ENCODE measurements at regions of chr6 and their contacts with region 1.

Region 1: DNA sequence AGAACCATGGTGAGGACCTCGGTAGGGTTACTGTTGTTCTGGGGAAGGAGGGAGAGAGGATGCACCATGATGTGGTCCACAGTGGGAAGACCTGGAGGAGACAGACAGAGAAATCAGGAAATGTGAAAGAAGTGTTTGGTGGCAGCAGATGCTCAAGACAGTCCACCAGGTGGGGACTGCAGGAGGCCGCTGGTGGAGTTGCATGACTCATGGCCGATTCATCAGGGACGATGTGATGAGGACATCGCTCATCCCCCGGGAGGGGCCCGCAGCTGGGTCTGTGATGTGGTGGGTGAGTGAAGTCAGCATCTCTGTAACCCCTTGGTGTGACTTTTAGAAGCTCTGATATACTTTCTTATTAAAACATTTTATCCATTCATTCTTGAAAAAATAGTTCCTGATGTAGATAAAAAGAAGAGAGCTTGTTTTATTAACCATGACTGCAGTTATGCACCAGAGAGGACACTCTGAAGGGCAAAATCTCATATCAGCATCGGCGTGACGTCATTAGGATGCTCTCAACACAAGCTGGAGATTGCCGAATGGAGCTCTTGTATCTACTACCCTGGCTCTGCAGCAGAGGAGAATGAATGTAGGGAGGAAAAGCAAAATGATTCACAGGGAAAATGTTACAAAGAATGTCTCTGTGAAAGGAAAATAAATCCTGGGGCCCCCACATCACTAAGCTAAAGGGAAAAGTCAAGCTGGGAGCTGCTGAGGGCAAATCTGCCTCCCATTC is 71.2 kb downstream of the RAMACL start:
- DNase-seq: peak; percentile 83
- H3K4me3 Mint-ChIP-seq: no peak overlapping the region
- H3K27ac Mint-ChIP-seq: no peak overlapping the region
- H3K4me1 Mint-ChIP-seq: peaks cover 20% of the 10 kb centered on the region
- H3K27me3 Mint-ChIP-seq: no peaks in the 10 kb centered on the region
- CTCF ChIP-seq: peak; percentile 54

Region 2: GRCh38 chr6:166556871-166557322 is 41.7 kb after region 1 on chr6:
- CTCF ChIA-PET with region 1: interaction called, 3 read pairs
- POLR2A ChIA-PET with region 1: no interaction called
- intact Hi-C with region 1: loop called (anchors 2 kb)
- DNase-seq: peak; percentile 99
- H3K4me3 Mint-ChIP-seq: peak overlapping the region; percentile 68
- H3K27ac Mint-ChIP-seq: peak overlapping the region; percentile 86
- H3K4me1 Mint-ChIP-seq: peaks cover 64% of the 10 kb centered on the region
- H3K27me3 Mint-ChIP-seq: no peaks in the 10 kb centered on the region
- CTCF ChIP-seq: no peak

Region 3: DNA sequence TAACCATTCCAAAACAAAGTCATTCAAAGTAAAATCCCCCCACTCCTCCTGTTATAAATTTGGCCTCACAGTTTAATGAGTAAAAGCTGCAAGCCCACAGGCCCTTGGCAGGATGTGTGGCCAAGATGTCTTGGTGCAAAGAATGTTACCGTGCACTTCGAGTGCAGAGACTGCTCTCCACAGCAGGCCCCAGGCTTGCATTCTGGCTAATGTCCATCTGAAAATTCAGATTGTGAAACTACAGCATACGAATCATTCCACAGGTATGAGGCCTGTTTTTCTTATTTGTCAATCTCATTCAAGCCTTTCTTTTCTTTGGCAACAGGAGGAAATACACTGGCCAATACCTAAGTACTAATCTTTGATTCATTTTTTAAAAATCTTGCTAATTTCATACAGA is 104.7 kb after region 1 on chr6:
- CTCF ChIA-PET with region 1: interaction called, 12 read pairs
- POLR2A ChIA-PET with region 1: interaction called, 3 read pairs
- intact Hi-C with region 1: no loop called
- DNase-seq: peak; percentile 94
- H3K4me3 Mint-ChIP-seq: peak overlapping the region; percentile 67
- H3K27ac Mint-ChIP-seq: peak overlapping the region; percentile 81
- H3K4me1 Mint-ChIP-seq: peaks cover 63% of the 10 kb centered on the region
- H3K27me3 Mint-ChIP-seq: no peaks in the 10 kb centered on the region
- CTCF ChIP-seq: no peak

Region 4: DNA sequence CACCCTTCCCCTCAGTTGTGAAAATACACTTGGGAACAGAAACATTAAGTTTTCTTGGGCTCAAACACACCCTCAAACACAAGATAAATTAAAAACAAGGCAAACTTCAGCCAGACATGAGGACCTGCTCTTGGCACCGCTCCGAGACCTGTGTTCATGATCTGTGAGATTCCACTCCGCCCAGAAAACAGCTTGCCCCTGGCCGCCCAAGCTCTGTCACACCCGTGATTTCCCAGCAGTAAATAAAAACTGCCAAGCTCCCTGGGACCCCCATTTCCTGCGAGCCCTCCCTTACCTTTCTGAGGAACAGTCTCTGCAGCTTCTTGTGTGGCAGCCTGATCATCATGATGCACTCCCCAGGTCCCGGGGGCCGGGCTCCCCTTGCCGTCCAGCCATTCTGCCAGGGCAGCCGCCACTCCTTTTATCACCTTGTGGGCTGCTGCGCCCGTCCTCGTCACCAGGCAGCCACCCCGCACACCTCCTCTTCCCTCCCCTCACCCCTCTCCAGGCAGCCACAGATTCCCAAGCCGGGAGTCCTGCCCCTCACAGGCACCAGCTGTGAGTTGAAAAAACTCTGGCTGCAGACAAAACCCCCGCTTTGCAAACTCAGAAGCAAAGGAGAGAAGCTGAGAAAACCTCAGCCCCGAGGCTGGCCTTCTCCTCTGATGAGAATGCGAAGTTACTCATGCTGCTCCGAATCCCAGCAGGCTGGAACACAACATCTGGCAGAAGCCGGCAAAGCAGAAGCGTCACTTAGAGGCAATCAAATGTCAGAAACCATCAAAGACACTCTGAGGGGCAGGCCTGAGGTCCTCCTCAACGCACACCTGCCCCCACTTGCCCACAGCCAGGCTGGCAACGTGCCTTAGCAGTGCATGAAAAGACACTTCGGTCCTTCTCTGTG is 242.2 kb after region 1 on chr6:
- CTCF ChIA-PET with region 1: no interaction called
- POLR2A ChIA-PET with region 1: no interaction called
- intact Hi-C with region 1: loop called (anchors 5 kb)
- DNase-seq: no peak
- H3K4me3 Mint-ChIP-seq: peak overlapping the region; percentile 70
- H3K27ac Mint-ChIP-seq: peak overlapping the region; percentile 11
- H3K4me1 Mint-ChIP-seq: peaks cover 8% of the 10 kb centered on the region
- H3K27me3 Mint-ChIP-seq: peaks cover 42% of the 10 kb centered on the region
- CTCF ChIP-seq: no peak